Activated CD4-positive, alpha-beta T cell treated with anti-CD3 and anti-CD28 coated beads, Interleukin-2, amount 10 ng/mL, durations not matched to agents 7 days and 5 days (primary cell): ENCODE measurements at regions of chr15 and their contacts with region 1.

Region 1: GRCh38 chr15:73908030-73908821 is 18.0 kb upstream of the LOXL1 start:
- DNase-seq: peak; percentile 83
- H3K4me3 Mint-ChIP-seq: no peak overlapping the region
- H3K27ac Mint-ChIP-seq: no peak overlapping the region
- H3K4me1 Mint-ChIP-seq: peaks cover 11% of the 10 kb centered on the region
- H3K27me3 Mint-ChIP-seq: no peaks in the 10 kb centered on the region

Region 2: DNA sequence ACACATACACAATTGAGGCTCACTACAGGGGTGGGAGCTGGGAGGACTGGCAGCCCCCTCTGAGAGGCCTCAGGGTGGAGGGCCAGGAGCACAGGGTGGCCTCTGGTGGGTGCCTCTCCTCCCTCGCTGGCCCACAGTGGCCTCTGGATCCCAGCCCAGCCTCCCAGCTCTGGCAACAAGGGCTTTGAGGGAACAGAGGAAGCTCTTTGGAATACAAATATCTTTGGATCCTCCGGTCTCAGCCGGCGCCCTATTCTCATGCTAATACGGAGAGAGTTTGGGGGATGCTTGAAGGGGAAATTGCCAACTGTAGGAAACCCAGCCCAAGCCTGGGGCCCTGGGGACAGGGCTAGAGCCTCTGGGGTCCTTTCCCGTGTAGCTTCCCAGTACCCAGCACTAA is 121.7 kb before region 1 on chr15:
- CTCF ChIA-PET with region 1: no interaction called
- POLR2A ChIA-PET with region 1: no interaction called
- DNase-seq: no peak
- H3K4me3 Mint-ChIP-seq: no peak overlapping the region
- H3K27ac Mint-ChIP-seq: no peak overlapping the region
- H3K4me1 Mint-ChIP-seq: no peaks in the 10 kb centered on the region
- H3K27me3 Mint-ChIP-seq: no peaks in the 10 kb centered on the region

Region 3: GRCh38 chr15:73897441-73898261 is 10.6 kb before region 1 on chr15:
- CTCF ChIA-PET with region 1: interaction called, 26 read pairs
- POLR2A ChIA-PET with region 1: interaction called, 3 read pairs
- DNase-seq: peak; percentile 75
- H3K4me3 Mint-ChIP-seq: no peak overlapping the region
- H3K27ac Mint-ChIP-seq: no peak overlapping the region
- H3K4me1 Mint-ChIP-seq: peaks cover 6% of the 10 kb centered on the region
- H3K27me3 Mint-ChIP-seq: peaks cover 2% of the 10 kb centered on the region

Region 4: DNA sequence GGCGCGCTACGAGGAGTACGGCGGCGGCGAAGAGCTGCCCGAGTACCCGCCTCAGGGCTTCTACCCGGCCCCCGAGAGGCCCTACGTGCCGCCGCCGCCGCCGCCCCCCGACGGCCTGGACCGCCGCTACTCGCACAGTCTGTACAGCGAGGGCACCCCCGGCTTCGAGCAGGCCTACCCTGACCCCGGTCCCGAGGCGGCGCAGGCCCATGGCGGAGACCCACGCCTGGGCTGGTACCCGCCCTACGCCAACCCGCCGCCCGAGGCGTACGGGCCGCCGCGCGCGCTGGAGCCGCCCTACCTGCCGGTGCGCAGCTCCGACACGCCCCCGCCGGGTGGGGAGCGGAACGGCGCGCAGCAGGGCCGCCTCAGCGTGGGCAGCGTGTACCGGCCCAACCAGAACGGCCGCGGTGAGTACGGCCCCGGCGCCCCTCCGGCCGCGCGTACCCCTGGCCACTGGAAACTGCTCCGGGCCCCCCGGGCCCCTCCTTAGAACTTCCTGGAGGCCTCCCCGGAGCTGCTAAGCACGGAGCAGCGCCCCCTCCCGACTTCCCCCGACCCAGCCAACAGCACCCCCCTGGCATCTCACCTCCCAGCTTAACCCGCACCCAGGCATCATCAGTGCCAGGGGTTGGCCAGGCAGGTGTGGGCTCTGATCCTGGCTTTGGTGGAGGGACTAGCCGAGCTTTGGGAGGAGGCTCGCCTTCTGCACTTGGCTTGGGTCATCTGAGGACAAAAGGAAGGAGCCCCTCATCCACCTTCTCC is 19.4 kb after region 1 on chr15:
- CTCF ChIA-PET with region 1: interaction called, 10 read pairs
- POLR2A ChIA-PET with region 1: no interaction called
- DNase-seq: peak; percentile 73
- H3K4me3 Mint-ChIP-seq: peak overlapping the region; percentile 69
- H3K27ac Mint-ChIP-seq: peak overlapping the region; percentile 63
- H3K4me1 Mint-ChIP-seq: peaks cover 58% of the 10 kb centered on the region
- H3K27me3 Mint-ChIP-seq: peaks cover 3% of the 10 kb centered on the region

Region 5: GRCh38 chr15:73979636-73980035 is 71.4 kb after region 1 on chr15:
- CTCF ChIA-PET with region 1: no interaction called
- POLR2A ChIA-PET with region 1: no interaction called
- DNase-seq: no peak
- H3K4me3 Mint-ChIP-seq: no peak overlapping the region
- H3K27ac Mint-ChIP-seq: peak overlapping the region; percentile 44
- H3K4me1 Mint-ChIP-seq: peaks cover 62% of the 10 kb centered on the region
- H3K27me3 Mint-ChIP-seq: peaks cover 14% of the 10 kb centered on the region